CD8-positive, alpha-beta T cell (primary cell): ENCODE measurements at regions of chr7 and their contacts with region 1.

Region 1: GRCh38 chr7:138459413-138460175 is 465 bp upstream of the TRIM24 start:
- DNase-seq: peak; percentile 95 to 99 (median 97)
- ATAC-seq: peak; percentile 85
- H3K4me3 ChIP-seq: peak overlapping the region; percentile 18 to 42
- H3K4me3 Mint-ChIP-seq: peak overlapping the region; percentile 96
- H3K27ac ChIP-seq: peak overlapping the region in 1 of 2 experiments; percentile 2
- H3K27ac Mint-ChIP-seq: peak overlapping the region; percentile 86
- H3K4me1 ChIP-seq: peaks cover 14% of the 10 kb centered on the region
- H3K4me1 Mint-ChIP-seq: peaks cover 28% of the 10 kb centered on the region
- H3K27me3 ChIP-seq: no peaks in the 10 kb centered on the region
- H3K27me3 Mint-ChIP-seq: no peaks in the 10 kb centered on the region
- CTCF ChIP-seq: no peak

Region 2: GRCh38 chr7:138002096-138002827 is 457.3 kb before region 1 on chr7:
- CTCF ChIA-PET with region 1: no interaction called
- POLR2A ChIA-PET with region 1: no interaction called
- intact Hi-C with region 1: loop called (anchors 1 to 2 kb)
- DNase-seq: peak; percentile 96 to 100 (median 98)
- ATAC-seq: peak; percentile 88
- H3K4me3 ChIP-seq: peak overlapping the region; percentile 81 to 97
- H3K4me3 Mint-ChIP-seq: peak overlapping the region; percentile 90
- H3K27ac ChIP-seq: peak overlapping the region; percentile 72 to 85
- H3K27ac Mint-ChIP-seq: peak overlapping the region; percentile 91
- H3K4me1 ChIP-seq: peaks cover 11% of the 10 kb centered on the region
- H3K4me1 Mint-ChIP-seq: peaks cover 33% of the 10 kb centered on the region
- H3K27me3 ChIP-seq: no peaks in the 10 kb centered on the region
- H3K27me3 Mint-ChIP-seq: no peaks in the 10 kb centered on the region
- CTCF ChIP-seq: peak; percentile 96

Region 3: GRCh38 chr7:138865843-138866242 is 406.2 kb after region 1 on chr7:
- CTCF ChIA-PET with region 1: no interaction called
- POLR2A ChIA-PET with region 1: no interaction called
- intact Hi-C with region 1: loop called in 1 of 2 experiments (anchors 5 kb)
- DNase-seq: peak in 7 of 9 experiments; percentile 19 to 66 (median 56)
- ATAC-seq: peak; percentile 87
- H3K4me3 ChIP-seq: no peak overlapping the region
- H3K4me3 Mint-ChIP-seq: no peak overlapping the region
- H3K27ac ChIP-seq: no peak overlapping the region
- H3K27ac Mint-ChIP-seq: no peak overlapping the region
- H3K4me1 ChIP-seq: no peaks in the 10 kb centered on the region
- H3K4me1 Mint-ChIP-seq: peaks cover 4% of the 10 kb centered on the region
- H3K27me3 ChIP-seq: no peaks in the 10 kb centered on the region
- H3K27me3 Mint-ChIP-seq: peaks cover 3% of the 10 kb centered on the region
- CTCF ChIP-seq: peak; percentile 52

Region 4: GRCh38 chr7:139133335-139134139 is 673.9 kb after region 1 on chr7:
- CTCF ChIA-PET with region 1: no interaction called
- POLR2A ChIA-PET with region 1: no interaction called
- intact Hi-C with region 1: loop called in 1 of 2 experiments (anchors 5 kb)
- DNase-seq: peak; percentile 81 to 94 (median 89)
- ATAC-seq: peak; percentile 98
- H3K4me3 ChIP-seq: peak overlapping the region; percentile 60 to 63
- H3K4me3 Mint-ChIP-seq: peak overlapping the region; percentile 87
- H3K27ac ChIP-seq: peak overlapping the region; percentile 62 to 63
- H3K27ac Mint-ChIP-seq: peak overlapping the region; percentile 83
- H3K4me1 ChIP-seq: peaks cover 7% of the 10 kb centered on the region
- H3K4me1 Mint-ChIP-seq: peaks cover 13% of the 10 kb centered on the region
- H3K27me3 ChIP-seq: no peaks in the 10 kb centered on the region
- H3K27me3 Mint-ChIP-seq: no peaks in the 10 kb centered on the region
- CTCF ChIP-seq: no peak

Region 5: GRCh38 chr7:139332697-139333359 is 873.2 kb after region 1 on chr7:
- CTCF ChIA-PET with region 1: no interaction called
- POLR2A ChIA-PET with region 1: no interaction called
- intact Hi-C with region 1: loop called in 1 of 2 experiments (anchors 10 kb)
- DNase-seq: no peak
- ATAC-seq: no peak
- H3K4me3 ChIP-seq: no peak overlapping the region
- H3K4me3 Mint-ChIP-seq: no peak overlapping the region
- H3K27ac ChIP-seq: no peak overlapping the region
- H3K27ac Mint-ChIP-seq: no peak overlapping the region
- H3K4me1 ChIP-seq: no peaks in the 10 kb centered on the region
- H3K4me1 Mint-ChIP-seq: peaks cover 12% of the 10 kb centered on the region
- H3K27me3 ChIP-seq: no peaks in the 10 kb centered on the region
- H3K27me3 Mint-ChIP-seq: no peaks in the 10 kb centered on the region
- CTCF ChIP-seq: no peak